ENCODE measurements at regions of chr13 and their contacts with region 1.

Region 1: DNA sequence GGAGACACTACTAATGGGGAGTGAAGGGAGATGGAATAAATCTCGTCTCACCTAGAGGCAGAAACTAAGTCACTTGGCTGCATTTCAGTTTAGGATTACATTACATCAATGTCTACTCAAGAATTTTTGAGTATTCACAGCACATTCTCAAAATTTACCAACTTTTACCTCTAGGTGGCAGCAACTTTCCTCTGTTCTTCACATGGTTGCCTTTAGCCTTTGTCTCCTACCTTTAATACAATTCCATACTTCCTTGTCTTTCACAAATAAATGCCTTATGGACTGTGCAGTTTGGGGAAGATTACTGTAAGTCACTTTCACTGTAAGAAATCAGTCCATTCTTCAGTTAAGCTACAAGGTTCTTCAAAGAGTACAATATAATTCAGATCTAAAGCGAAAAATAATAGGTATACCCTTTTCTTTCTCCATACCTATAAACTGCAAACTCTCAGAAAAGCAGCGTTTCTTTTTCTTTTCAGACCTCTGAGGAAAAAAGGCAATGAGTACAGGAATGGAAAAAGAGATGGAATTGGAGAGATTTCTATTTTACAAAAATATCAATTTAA is 379.4 kb downstream of the KLF12 start:
- DNase-seq: peak; percentile 35
- H3K4me3 ChIP-seq: no peak overlapping the region
- H3K27ac ChIP-seq: no peak overlapping the region
- H3K4me1 ChIP-seq: no peaks in the 10 kb centered on the region
- H3K27me3 ChIP-seq: no peaks in the 10 kb centered on the region
- CTCF ChIP-seq: peak; percentile 19 to 77 (median 66)
- POLR2A ChIP-seq: no peak

Region 2: DNA sequence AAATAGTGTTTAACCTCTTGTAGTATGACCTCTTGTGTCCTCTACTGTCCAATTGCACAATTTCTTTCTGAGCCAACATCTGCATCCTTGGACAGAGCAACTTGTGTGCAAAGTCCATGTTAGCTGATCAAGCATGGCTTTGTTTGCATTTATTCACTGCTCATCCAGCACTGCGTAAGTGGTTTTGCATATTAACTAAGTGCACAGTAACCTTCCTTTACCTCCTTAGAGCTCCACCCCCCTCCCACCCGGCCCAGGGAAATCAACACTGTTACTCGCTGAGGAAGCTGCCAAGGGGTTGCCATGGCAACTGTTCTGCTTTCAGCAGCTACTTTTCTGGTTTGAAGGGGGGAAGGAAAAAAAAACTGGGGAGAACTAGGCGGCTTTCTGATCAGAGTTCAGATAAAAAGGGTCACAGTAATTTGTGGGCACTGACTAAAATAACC is 532.9 kb after region 1 on chr13:
- intact Hi-C with region 1: loop called (anchors 2 kb)
- DNase-seq: peak; percentile 25
- H3K4me3 ChIP-seq: no peak overlapping the region
- H3K27ac ChIP-seq: no peak overlapping the region
- H3K4me1 ChIP-seq: peaks cover 7% of the 10 kb centered on the region
- H3K27me3 ChIP-seq: no peaks in the 10 kb centered on the region
- CTCF ChIP-seq: no peak
- POLR2A ChIP-seq: no peak

Region 3: GRCh38 chr13:75219479-75220237 is 1464.8 kb after region 1 on chr13:
- intact Hi-C with region 1: loop called (anchors 10 kb)
- DNase-seq: peak; percentile 67
- H3K4me3 ChIP-seq: peak overlapping the region in 1 of 2 donors; percentile 19
- H3K27ac ChIP-seq: no peak overlapping the region
- H3K4me1 ChIP-seq: no peaks in the 10 kb centered on the region
- H3K27me3 ChIP-seq: no peaks in the 10 kb centered on the region
- CTCF ChIP-seq: peak; percentile 86 to 93 (median 90)
- POLR2A ChIP-seq: no peak

Measured in prostate gland (tissue), 2 donors.